CD4-positive, alpha-beta memory T cell (primary cell): ENCODE measurements at regions of chr22 and their contacts with region 1.

Region 1: DNA sequence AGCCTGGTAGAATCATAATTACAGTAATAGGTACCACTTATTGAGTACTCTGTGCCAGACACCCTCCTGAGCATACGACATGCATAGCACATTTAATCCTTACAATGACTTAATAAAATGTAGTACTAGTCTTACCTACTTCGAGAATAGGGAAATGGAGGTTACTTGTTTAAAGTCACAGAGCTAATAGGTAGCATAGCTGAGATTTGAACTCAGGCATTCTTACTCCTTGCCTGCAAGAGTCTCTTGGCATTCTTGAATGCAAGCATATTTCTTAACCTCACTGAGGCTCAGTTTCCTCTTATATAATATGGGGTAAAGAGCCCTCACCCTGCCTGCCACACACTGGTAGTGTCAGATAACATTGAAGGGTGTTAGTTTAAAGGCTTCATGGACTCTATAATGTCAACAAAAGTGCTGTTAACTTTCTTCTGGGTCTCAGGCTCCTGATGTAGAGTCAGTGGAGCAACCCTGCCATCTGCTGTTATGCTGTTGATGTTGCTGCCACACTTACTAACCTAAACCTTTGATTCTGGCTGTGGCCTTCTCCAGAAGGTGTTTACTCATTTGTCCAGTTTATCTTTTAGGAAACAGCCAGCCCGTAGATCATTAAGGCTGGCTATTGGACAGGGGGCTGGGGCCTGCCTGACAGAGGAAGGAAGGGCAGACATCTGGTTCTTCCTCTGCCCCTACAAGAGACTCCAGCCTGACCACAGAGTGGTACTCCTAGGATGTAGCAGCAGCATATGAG is 18.9 kb downstream of the LIMK2 start:
- DNase-seq: peak; percentile 60 to 65 (median 61)
- H3K4me3 ChIP-seq: no peak overlapping the region
- H3K4me3 Mint-ChIP-seq: peak overlapping the region in 6 of 8 donors; percentile 21 to 84 (median 56)
- H3K27ac ChIP-seq: peak overlapping the region; percentile 43
- H3K27ac Mint-ChIP-seq: peak overlapping the region; percentile 81 to 96 (median 92)
- H3K4me1 ChIP-seq: peaks cover 30% of the 10 kb centered on the region
- H3K4me1 Mint-ChIP-seq: peaks cover 36 to 68% (median 54%) of the 10 kb centered on the region in 4 donors
- H3K27me3 ChIP-seq: no peaks in the 10 kb centered on the region
- H3K27me3 Mint-ChIP-seq: no peaks in the 10 kb centered on the region

Region 2: GRCh38 chr22:30947816-30948454 is 283.1 kb before region 1 on chr22:
- CTCF ChIA-PET with region 1: interaction called, 7 read pairs
- POLR2A ChIA-PET with region 1: no interaction called
- intact Hi-C with region 1: loop called (anchors 1 kb)
- DNase-seq: peak in 4 of 5 donors; percentile 34 to 46 (median 39)
- H3K4me3 ChIP-seq: no peak overlapping the region
- H3K4me3 Mint-ChIP-seq: no peak overlapping the region
- H3K27ac ChIP-seq: no peak overlapping the region
- H3K27ac Mint-ChIP-seq: no peak overlapping the region
- H3K4me1 ChIP-seq: peaks cover 33% of the 10 kb centered on the region
- H3K4me1 Mint-ChIP-seq: peaks cover 31 to 50% (median 45%) of the 10 kb centered on the region in 4 donors
- H3K27me3 ChIP-seq: no peaks in the 10 kb centered on the region
- H3K27me3 Mint-ChIP-seq: no peaks in the 10 kb centered on the region

Region 3: DNA sequence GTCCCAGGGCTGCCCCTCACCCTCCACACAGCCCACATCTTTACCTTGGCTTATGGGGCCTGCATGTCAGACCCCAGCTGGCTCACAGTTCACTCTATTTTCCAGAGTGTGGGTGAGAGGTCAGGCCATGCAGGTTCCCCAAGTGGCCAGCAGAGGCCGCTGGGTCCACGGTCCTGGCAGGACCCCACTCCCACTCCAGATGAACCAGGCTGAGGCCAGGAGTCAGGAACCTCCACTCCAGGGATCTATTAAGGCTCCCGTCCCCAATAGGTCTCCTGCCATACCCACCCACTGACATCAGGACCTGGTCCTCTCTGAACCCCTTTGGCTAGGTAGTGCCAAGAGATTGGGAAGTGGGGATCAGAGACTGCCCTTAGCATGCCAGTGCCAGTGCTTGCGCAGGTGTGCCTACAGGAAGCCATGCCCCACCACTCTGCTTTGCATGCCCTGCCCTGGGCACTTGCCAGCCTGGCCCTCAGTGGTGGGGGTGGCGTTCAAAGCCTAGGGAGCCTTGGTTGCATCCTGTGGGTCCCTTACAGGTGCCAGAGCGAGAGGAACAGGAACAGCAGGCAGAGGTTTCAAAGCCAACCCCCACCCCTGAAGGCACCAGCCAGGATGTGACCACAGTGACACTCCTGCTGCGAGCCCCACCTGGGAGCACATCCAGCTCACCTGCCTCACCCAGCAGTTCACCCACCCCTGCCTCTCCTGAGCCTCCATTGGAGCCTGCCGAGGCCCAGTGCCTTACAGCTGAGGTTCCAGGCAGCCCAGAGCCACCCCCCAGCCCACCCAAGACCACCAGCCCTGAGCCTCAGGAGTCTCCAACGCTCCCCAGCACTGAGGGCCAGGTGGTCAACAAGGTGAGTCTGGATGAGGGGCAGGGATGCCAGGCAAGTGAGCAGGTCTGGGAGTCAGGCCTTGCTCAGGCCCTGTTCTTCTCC is 141.6 kb before region 1 on chr22:
- CTCF ChIA-PET with region 1: interaction called, 26 read pairs
- POLR2A ChIA-PET with region 1: interaction called, 6 read pairs
- intact Hi-C with region 1: loop called (anchors 1 kb)
- DNase-seq: peak; percentile 30 to 39 (median 32)
- H3K4me3 ChIP-seq: no peak overlapping the region
- H3K4me3 Mint-ChIP-seq: no peak overlapping the region
- H3K27ac ChIP-seq: no peak overlapping the region
- H3K27ac Mint-ChIP-seq: peak overlapping the region in 2 of 7 donors; percentile 41 to 70
- H3K4me1 ChIP-seq: peaks cover 5% of the 10 kb centered on the region
- H3K4me1 Mint-ChIP-seq: peaks cover under 1 to 2% (median 1%) of the 10 kb centered on the region in 4 donors
- H3K27me3 ChIP-seq: no peaks in the 10 kb centered on the region
- H3K27me3 Mint-ChIP-seq: no peaks in the 10 kb centered on the region

Region 4: DNA sequence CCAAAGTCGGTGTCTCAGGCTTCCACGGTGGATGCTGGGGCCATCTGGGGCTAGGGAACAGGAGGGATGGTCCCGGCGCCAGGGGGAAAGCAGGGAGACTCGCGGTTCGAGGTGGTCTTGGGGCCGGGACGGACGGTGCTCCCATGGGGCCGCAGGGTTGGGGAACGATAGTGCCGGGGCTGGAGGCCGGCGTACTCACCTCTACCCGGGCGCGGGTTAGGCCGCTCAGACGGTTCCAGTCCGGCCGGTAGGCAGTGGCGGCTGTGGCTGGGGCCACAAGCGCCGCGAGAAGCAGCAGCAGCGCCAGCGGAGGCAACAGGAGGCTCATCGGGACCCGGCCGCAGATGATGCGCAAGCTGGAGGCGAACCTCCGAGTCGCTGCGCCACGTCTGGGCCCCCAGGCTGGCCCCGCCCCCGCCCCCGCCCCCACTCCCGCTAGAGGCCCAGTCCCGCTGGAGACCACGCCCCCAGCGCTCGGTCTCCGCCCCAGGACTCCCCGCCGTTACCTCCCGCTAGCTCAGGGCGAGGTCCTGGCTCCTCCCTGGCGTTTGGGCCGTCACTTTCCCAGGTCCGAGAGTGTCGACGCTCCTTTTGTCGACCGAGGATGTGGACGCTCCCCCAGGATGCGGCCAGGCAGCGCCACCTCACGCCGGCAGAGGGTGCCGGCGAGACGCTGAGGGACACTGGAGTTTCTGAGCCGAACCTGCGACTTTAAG is 123.7 kb before region 1 on chr22 and contains the start of gene SELENOM:
- CTCF ChIA-PET with region 1: interaction called, 37 read pairs
- POLR2A ChIA-PET with region 1: interaction called, 6 read pairs
- intact Hi-C with region 1: loop called (anchors 1 kb)
- DNase-seq: peak; percentile 84 to 90 (median 85)
- H3K4me3 ChIP-seq: peak within 1 kb of the TSS; percentile 80 to 97
- H3K4me3 Mint-ChIP-seq: peak within 1 kb of the TSS; percentile 89 to 97 (median 94)
- H3K27ac ChIP-seq: peak within 1 kb of the TSS; percentile 62
- H3K27ac Mint-ChIP-seq: peak within 1 kb of the TSS; percentile 86 to 96 (median 94)
- H3K4me1 ChIP-seq: peaks cover 20% of the 10 kb centered on the region
- H3K4me1 Mint-ChIP-seq: peaks cover 17 to 31% (median 24%) of the 10 kb centered on the region in 4 donors
- H3K27me3 ChIP-seq: no peaks in the 10 kb centered on the region
- H3K27me3 Mint-ChIP-seq: no peaks in the 10 kb centered on the region
- total RNA-seq, gene SELENOM: 64.2 to 68.6 TPM

Region 5: DNA sequence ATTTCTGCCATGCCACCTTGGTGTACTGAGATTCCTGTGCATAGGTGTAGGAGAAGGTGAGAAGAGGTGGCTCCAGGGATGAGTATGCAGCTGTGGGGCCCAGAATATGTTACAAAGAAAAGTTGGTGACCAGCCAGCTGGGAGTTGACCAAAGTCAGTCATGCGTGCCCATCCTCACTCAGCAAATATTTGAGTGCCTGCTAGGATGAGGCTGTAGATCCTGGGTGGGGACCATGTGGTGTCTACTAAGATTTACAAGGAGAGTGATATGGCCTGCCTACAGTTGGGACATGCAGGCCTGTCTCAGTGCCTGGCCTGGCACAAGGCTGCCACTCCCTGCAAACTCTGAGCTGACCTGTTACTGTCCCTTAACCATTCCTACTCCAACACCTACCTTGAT is 51.7 kb before region 1 on chr22:
- CTCF ChIA-PET with region 1: no interaction called
- POLR2A ChIA-PET with region 1: no interaction called
- intact Hi-C with region 1: no loop called
- DNase-seq: no peak
- H3K4me3 ChIP-seq: no peak overlapping the region
- H3K4me3 Mint-ChIP-seq: no peak overlapping the region
- H3K27ac ChIP-seq: no peak overlapping the region
- H3K27ac Mint-ChIP-seq: peak overlapping the region in 1 of 7 donors; percentile 42
- H3K4me1 ChIP-seq: no peaks in the 10 kb centered on the region
- H3K4me1 Mint-ChIP-seq: peaks cover 8 to 30% (median 19%) of the 10 kb centered on the region in 4 donors
- H3K27me3 ChIP-seq: no peaks in the 10 kb centered on the region
- H3K27me3 Mint-ChIP-seq: no peaks in the 10 kb centered on the region

Region 6: GRCh38 chr22:31218565-31219262 is 12.3 kb before region 1 on chr22:
- CTCF ChIA-PET with region 1: interaction called, 178 read pairs
- POLR2A ChIA-PET with region 1: interaction called, 75 read pairs
- intact Hi-C with region 1: no loop called
- DNase-seq: no peak
- H3K4me3 ChIP-seq: no peak overlapping the region
- H3K4me3 Mint-ChIP-seq: no peak overlapping the region
- H3K27ac ChIP-seq: no peak overlapping the region
- H3K27ac Mint-ChIP-seq: peak overlapping the region; percentile 59 to 88 (median 81)
- H3K4me1 ChIP-seq: peaks cover 47% of the 10 kb centered on the region
- H3K4me1 Mint-ChIP-seq: peaks cover 42 to 75% (median 53%) of the 10 kb centered on the region in 4 donors
- H3K27me3 ChIP-seq: no peaks in the 10 kb centered on the region
- H3K27me3 Mint-ChIP-seq: no peaks in the 10 kb centered on the region

Region 7: GRCh38 chr22:31248138-31248745 is 17.2 kb after region 1 on chr22:
- CTCF ChIA-PET with region 1: interaction called, 10 read pairs
- POLR2A ChIA-PET with region 1: interaction called, 5 read pairs
- intact Hi-C with region 1: no loop called
- DNase-seq: peak; percentile 61 to 81 (median 69)
- H3K4me3 ChIP-seq: no peak overlapping the region
- H3K4me3 Mint-ChIP-seq: peak overlapping the region; percentile 22 to 85 (median 78)
- H3K27ac ChIP-seq: no peak overlapping the region
- H3K27ac Mint-ChIP-seq: peak overlapping the region in 6 of 7 donors; percentile 61 to 87 (median 78)
- H3K4me1 ChIP-seq: peaks cover 42% of the 10 kb centered on the region
- H3K4me1 Mint-ChIP-seq: peaks cover 22 to 50% (median 27%) of the 10 kb centered on the region in 4 donors
- H3K27me3 ChIP-seq: no peaks in the 10 kb centered on the region
- H3K27me3 Mint-ChIP-seq: no peaks in the 10 kb centered on the region